WTC11 (cell line): ENCODE measurements at regions of chr14 and their contacts with region 1.

Region 1: DNA sequence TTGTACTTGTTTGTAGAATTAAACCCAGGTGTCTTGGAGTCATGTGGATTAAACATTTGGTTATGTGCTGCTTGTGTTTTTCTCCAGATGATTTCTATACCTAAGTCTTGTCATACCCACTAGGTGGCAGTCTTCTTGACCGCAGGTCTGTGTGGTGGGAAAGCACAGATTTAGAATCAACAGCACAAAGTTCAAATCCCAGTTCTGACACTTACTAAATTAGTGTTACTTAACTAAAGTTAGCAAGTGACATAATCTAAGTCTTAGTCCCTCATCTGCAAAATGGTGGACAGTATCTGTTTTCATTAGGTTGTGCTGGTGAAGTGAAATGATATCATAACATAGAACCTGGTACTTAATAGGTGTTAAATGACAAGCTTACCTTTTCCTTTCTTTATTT is 151.0 kb upstream of the ARHGAP5 start:
- DNase-seq: no peak
- ATAC-seq: peak; percentile 55; the same call in 1 of the 2 replicates
- H3K4me3 Mint-ChIP-seq: no peak overlapping the region
- H3K27ac Mint-ChIP-seq: no peak overlapping the region
- H3K4me1 Mint-ChIP-seq: peaks cover 8% of the 10 kb centered on the region
- H3K27me3 Mint-ChIP-seq: no peaks in the 10 kb centered on the region
- CTCF ChIP-seq: peak; percentile 41

Region 2: GRCh38 chr14:31895206-31895605 is 30.9 kb before region 1 on chr14:
- CTCF ChIA-PET with region 1: no interaction called
- POLR2A ChIA-PET with region 1: no interaction called
- DNase-seq: no peak
- ATAC-seq: no peak
- H3K4me3 Mint-ChIP-seq: no peak overlapping the region
- H3K27ac Mint-ChIP-seq: no peak overlapping the region
- H3K4me1 Mint-ChIP-seq: peaks cover 29% of the 10 kb centered on the region
- H3K27me3 Mint-ChIP-seq: no peaks in the 10 kb centered on the region
- CTCF ChIP-seq: no peak

Region 3: GRCh38 chr14:31911160-31911559 is 15.0 kb before region 1 on chr14:
- CTCF ChIA-PET with region 1: no interaction called
- POLR2A ChIA-PET with region 1: no interaction called
- DNase-seq: no peak
- ATAC-seq: no peak
- H3K4me3 Mint-ChIP-seq: no peak overlapping the region
- H3K27ac Mint-ChIP-seq: no peak overlapping the region
- H3K4me1 Mint-ChIP-seq: no peaks in the 10 kb centered on the region
- H3K27me3 Mint-ChIP-seq: no peaks in the 10 kb centered on the region
- CTCF ChIP-seq: no peak

Region 4: GRCh38 chr14:31950764-31951637 is 24.9 kb after region 1 on chr14:
- CTCF ChIA-PET with region 1: interaction called, 14 read pairs
- POLR2A ChIA-PET with region 1: no interaction called
- DNase-seq: peak; percentile 45
- ATAC-seq: peak; percentile 92
- H3K4me3 Mint-ChIP-seq: no peak overlapping the region
- H3K27ac Mint-ChIP-seq: no peak overlapping the region
- H3K4me1 Mint-ChIP-seq: peaks cover 24% of the 10 kb centered on the region
- H3K27me3 Mint-ChIP-seq: no peaks in the 10 kb centered on the region; the same call in 1 of the 2 replicates
- CTCF ChIP-seq: no peak